ENCODE measurements at regions of chr11 and their contacts with region 1.

Region 1: DNA sequence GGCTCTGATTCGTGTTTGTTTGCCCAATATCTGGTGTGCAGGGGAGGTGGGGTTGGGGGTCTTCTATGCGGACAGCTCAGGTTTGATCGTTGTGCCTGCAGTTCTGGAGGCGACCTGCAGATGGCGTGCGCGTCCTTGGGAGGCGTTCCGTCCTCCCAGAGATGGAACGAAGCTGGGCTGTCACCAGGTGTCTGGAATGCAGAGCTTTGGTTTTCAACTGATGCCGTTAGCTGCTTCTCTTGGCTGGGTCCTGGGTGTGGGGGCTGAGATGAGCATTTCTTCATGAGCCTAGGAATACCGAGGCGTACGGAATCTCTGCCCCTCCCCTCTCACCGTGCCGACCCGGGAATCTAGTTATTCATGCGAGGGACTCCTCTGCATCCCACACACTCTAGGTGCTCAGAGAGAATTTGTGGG is 98.6 kb downstream of the CEP164 start:
- DNase-seq: peak; percentile 91
- H3K4me3 Mint-ChIP-seq: no peak overlapping the region
- H3K27ac Mint-ChIP-seq: no peak overlapping the region
- H3K4me1 Mint-ChIP-seq: no peaks in the 10 kb centered on the region
- H3K27me3 Mint-ChIP-seq: peaks cover 6% of the 10 kb centered on the region

Region 2: GRCh38 chr11:117621226-117621625 is 194.9 kb after region 1 on chr11:
- intact Hi-C with region 1: loop called (anchors 5 kb)
- DNase-seq: no peak
- H3K4me3 Mint-ChIP-seq: no peak overlapping the region
- H3K27ac Mint-ChIP-seq: no peak overlapping the region
- H3K4me1 Mint-ChIP-seq: no peaks in the 10 kb centered on the region
- H3K27me3 Mint-ChIP-seq: peaks cover 19% of the 10 kb centered on the region